ENCODE measurements at regions of chr17 and their contacts with region 1.

Region 1: DNA sequence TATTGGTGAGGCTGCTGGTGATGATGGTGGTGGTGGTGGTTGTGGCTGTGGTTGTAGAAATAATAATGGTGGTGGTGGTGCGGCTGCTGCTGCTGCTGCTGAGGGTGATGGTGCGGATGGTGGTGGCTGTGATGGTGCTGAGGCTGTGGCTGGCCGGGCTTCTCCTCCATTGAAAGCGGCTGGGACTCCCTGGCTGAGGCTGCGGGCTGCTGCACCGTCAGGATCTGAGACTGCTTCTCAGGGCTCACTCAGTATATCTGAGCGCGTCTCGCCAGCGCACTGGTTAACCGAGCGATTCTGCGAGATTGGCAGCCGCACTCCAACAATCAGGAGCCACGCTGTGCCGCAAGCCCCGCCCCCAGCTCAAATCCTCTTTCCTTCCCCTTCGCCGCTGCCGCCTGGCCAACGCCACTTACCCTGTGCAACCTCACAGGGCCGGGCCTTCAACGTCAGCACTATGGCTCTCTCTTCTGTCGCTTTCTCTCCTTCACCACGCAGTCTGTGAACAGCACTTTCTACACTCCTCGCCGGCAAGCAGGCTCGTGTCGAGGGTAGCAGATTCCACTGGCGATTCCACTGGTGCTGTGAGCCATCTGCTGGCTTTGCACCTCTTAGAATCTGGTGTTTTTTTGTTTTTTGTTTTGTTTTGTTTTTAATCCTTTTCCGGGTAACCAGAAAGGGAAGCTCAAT is at the start of gene NUFIP2:
- DNase-seq: peak; percentile 95
- ATAC-seq: peak; percentile 83
- H3K4me3 Mint-ChIP-seq: peak within 1 kb of the TSS; percentile 100
- H3K27ac Mint-ChIP-seq: peak within 1 kb of the TSS; percentile 100
- H3K4me1 Mint-ChIP-seq: peaks cover 45% of the 10 kb centered on the region
- H3K27me3 Mint-ChIP-seq: no peaks in the 10 kb centered on the region
- CTCF ChIP-seq: no peak
- total RNA-seq, gene NUFIP2: 61.0 and 61.8 TPM in 2 replicates

Region 2: DNA sequence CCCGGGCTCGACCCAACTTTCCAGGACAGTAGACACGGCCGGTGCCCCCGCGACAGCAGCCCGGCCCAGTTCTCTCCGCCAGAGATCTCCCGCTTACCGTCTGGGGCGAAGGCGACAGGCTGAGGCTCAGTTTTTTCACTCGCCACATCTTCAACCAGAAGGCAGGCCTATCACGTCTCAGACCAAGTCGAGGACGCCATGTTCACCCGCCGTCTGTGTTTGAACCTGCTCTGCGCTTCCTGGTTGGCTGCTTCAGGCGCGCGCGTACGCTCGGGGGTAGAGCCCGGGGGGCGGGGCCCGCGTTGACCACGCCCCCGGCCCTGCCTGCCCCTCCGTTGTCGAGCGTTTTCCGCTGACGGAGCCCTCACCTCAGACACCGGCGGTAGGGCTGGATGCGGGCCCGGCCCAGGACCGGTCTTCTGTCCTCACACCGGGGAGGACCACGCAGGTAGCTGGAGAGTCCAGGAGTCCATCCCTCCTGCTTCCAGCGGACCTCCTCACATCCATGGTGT is 695.2 kb before region 1 on chr17 and contains the start of gene SPAG5:
- CTCF ChIA-PET with region 1: no interaction called
- POLR2A ChIA-PET with region 1: no interaction called
- intact Hi-C with region 1: loop called (anchors 5 kb)
- DNase-seq: peak; percentile 94
- ATAC-seq: peak; percentile 89
- H3K4me3 Mint-ChIP-seq: peak within 1 kb of the TSS; percentile 87
- H3K27ac Mint-ChIP-seq: peak within 1 kb of the TSS; percentile 96
- H3K4me1 Mint-ChIP-seq: peaks cover 24% of the 10 kb centered on the region
- H3K27me3 Mint-ChIP-seq: no peaks in the 10 kb centered on the region
- CTCF ChIP-seq: no peak
- total RNA-seq, gene SPAG5: 14.6 and 15.8 TPM in 2 replicates

Region 3: DNA sequence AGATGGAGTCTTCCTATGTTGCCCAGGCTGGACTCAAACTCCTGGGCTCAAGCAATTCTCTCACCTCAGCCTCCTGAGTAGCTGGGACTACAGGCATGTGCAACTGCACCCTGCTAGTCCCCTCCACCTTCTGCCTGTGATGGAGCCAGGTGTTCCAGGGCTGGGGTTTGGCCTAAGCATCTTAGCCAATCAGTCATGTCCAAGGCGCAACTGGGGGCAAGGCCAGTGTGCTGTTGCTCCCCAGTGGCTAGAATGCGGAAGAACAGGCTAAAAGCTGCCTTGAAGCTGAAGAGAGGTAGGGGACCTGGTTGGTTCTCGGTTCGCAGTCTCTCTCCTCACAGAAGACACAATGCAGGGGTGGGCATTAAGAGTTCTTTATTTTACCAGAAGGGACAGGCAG is 415.1 kb before region 1 on chr17:
- CTCF ChIA-PET with region 1: no interaction called
- POLR2A ChIA-PET with region 1: no interaction called
- intact Hi-C with region 1: no loop called
- DNase-seq: no peak
- ATAC-seq: peak; percentile 64
- H3K4me3 Mint-ChIP-seq: no peak overlapping the region
- H3K27ac Mint-ChIP-seq: no peak overlapping the region
- H3K4me1 Mint-ChIP-seq: peaks cover 8% of the 10 kb centered on the region
- H3K27me3 Mint-ChIP-seq: no peaks in the 10 kb centered on the region
- CTCF ChIP-seq: no peak

Region 4: DNA sequence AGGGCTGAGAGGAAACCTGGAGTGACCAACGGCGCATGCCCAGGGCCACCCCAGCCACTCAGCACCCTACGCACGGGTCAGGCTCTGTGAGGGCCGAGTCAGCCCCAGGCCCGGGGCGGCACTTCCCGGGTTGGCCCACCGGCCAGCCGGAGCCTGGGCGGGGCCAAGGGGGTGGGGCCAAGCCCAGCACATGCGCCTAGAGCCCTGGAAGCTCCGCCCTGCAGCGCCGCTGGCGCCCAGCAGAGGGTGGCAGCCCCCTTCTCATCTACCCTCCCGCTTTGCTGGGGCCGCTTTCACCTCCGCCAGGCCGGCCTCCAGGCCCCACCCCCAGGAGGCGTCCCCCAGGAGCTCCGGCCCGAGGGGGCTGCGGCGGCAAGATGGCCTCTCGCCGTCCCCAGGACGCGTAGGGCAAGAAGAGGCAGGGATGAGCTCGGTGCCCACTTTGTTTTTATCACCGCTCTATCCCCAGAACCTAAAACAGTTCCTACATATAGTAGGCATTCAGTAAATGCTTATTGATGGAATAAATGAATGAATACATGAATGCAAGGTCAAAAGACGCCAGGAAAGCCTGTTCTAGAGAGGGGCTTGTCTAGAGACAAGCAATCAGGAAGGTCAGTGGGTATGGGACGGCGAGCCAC is 145.1 kb before region 1 on chr17:
- CTCF ChIA-PET with region 1: interaction called, 26 read pairs
- POLR2A ChIA-PET with region 1: interaction called, 25 read pairs
- intact Hi-C with region 1: loop called (anchors 1 kb)
- DNase-seq: peak; percentile 96
- ATAC-seq: peak; percentile 95
- H3K4me3 Mint-ChIP-seq: peak overlapping the region; percentile 83
- H3K27ac Mint-ChIP-seq: peak overlapping the region; percentile 89
- H3K4me1 Mint-ChIP-seq: peaks cover 45% of the 10 kb centered on the region
- H3K27me3 Mint-ChIP-seq: no peaks in the 10 kb centered on the region
- CTCF ChIP-seq: peak; percentile 27

Region 5: DNA sequence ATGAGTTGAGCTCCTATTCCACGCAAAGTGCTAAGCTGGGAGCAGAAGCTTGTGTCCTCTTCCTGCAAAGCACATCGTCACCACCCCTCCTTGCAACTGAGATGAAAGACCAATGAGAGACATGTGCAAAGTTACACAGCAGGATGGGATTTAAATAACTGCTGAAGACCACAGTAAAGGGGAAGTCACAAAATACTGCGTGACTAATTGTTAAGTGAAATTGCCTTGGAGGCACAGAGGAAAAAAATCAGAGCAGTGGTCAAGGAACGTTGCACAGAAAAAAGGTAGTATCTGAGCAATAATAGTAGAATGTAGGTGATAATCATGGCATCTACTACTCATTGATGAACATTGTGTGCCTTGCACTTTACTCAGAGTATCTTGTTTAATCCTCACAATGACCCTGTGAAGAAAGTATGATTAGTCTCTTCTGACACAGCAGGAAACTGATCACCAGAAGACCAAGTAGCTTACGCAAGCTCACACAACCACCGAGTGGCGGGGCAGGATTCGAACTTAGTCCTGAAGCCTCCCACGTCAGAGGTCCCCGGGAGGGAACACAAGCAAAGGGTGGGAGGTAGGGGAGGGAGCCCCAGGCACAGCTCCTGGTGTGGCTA is 98.5 kb before region 1 on chr17:
- CTCF ChIA-PET with region 1: no interaction called
- POLR2A ChIA-PET with region 1: interaction called, 10 read pairs
- intact Hi-C with region 1: no loop called
- DNase-seq: no peak
- ATAC-seq: peak; percentile 89
- H3K4me3 Mint-ChIP-seq: peak overlapping the region; percentile 71
- H3K27ac Mint-ChIP-seq: peak overlapping the region; percentile 67
- H3K4me1 Mint-ChIP-seq: peaks cover 25% of the 10 kb centered on the region
- H3K27me3 Mint-ChIP-seq: no peaks in the 10 kb centered on the region
- CTCF ChIP-seq: no peak

Region 6: GRCh38 chr17:29241015-29241963 is 52.7 kb before region 1 on chr17:
- CTCF ChIA-PET with region 1: no interaction called
- POLR2A ChIA-PET with region 1: no interaction called
- intact Hi-C with region 1: no loop called
- DNase-seq: no peak
- ATAC-seq: no peak
- H3K4me3 Mint-ChIP-seq: no peak overlapping the region
- H3K27ac Mint-ChIP-seq: no peak overlapping the region
- H3K4me1 Mint-ChIP-seq: no peaks in the 10 kb centered on the region
- H3K27me3 Mint-ChIP-seq: no peaks in the 10 kb centered on the region
- CTCF ChIP-seq: no peak

Region 7: DNA sequence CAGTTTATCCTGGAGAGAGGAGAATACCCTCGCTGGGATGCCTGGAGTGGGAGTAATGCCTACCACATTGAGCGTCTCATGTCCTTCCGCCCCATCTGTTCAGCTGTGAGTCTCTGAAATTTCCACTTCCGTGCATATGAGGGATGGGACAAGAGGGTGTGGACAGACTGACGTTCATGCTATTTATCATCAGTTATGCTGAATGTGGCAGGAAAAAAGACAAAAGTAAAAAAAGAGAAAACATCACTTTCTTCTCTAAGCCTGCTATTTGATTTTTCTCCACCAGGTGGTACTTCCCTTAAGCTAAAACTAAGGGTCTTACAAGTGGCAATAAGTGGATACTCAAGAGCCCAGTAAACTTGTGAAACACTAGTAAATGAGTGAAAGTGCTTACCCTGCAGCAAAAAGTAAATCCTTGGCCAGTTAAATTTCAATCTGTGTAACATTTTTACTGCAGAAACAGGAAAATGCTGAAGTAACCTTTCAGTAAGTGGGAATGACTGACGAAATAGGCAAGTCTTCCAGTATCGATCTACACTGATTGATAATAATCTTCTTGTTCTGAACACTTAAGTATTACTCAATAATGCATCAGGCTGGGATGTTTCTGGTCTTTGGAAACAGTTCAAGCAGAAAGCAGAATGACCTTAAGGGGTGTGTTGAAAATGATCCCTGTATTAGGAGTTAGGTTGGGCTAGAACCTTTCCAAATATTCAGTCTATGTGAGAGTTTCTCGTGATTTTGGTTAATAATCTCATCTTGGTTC is 41.8 kb before region 1 on chr17:
- CTCF ChIA-PET with region 1: no interaction called
- POLR2A ChIA-PET with region 1: no interaction called
- intact Hi-C with region 1: loop called (anchors 1 kb)
- DNase-seq: no peak
- ATAC-seq: no peak
- H3K4me3 Mint-ChIP-seq: no peak overlapping the region
- H3K27ac Mint-ChIP-seq: no peak overlapping the region
- H3K4me1 Mint-ChIP-seq: peaks cover 8% of the 10 kb centered on the region
- H3K27me3 Mint-ChIP-seq: no peaks in the 10 kb centered on the region
- CTCF ChIP-seq: no peak

Region 8: DNA sequence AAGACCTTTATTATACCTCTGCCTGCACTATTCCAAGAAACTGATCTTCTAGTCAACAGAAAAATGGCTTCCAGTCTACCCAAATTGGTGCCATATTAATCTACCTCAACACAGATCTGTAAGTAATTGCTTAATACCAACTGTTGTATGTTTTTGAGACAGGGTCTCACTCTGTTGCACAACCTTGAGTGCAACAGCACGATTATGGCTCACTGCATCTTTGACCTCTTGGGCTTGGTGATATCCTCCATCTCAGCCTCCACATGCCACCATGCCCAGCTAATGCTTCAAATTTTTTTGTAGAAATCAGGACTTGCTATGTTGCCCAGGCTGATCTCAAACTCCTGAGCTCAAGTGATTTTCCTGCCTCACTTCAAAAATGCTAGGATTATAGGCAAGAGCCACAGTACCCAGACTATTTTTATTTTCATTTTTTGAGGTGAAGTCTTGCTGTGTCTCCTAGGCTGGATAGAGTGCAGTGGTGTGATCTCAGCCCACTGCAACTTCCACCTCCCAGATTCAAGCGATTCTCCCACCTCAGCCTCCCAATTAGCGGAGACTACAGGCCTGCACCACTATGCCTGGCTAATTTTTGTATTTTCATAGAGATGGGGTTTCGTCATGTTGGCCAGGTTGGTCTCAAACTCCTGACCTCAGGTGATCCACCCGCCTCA is 14.5 kb before region 1 on chr17:
- CTCF ChIA-PET with region 1: interaction called, 4 read pairs
- POLR2A ChIA-PET with region 1: interaction called, 12 read pairs
- intact Hi-C with region 1: loop called (anchors 2 kb)
- DNase-seq: no peak
- ATAC-seq: no peak
- H3K4me3 Mint-ChIP-seq: no peak overlapping the region
- H3K27ac Mint-ChIP-seq: no peak overlapping the region
- H3K4me1 Mint-ChIP-seq: peaks cover 54% of the 10 kb centered on the region
- H3K27me3 Mint-ChIP-seq: no peaks in the 10 kb centered on the region
- CTCF ChIP-seq: no peak

Region 9: DNA sequence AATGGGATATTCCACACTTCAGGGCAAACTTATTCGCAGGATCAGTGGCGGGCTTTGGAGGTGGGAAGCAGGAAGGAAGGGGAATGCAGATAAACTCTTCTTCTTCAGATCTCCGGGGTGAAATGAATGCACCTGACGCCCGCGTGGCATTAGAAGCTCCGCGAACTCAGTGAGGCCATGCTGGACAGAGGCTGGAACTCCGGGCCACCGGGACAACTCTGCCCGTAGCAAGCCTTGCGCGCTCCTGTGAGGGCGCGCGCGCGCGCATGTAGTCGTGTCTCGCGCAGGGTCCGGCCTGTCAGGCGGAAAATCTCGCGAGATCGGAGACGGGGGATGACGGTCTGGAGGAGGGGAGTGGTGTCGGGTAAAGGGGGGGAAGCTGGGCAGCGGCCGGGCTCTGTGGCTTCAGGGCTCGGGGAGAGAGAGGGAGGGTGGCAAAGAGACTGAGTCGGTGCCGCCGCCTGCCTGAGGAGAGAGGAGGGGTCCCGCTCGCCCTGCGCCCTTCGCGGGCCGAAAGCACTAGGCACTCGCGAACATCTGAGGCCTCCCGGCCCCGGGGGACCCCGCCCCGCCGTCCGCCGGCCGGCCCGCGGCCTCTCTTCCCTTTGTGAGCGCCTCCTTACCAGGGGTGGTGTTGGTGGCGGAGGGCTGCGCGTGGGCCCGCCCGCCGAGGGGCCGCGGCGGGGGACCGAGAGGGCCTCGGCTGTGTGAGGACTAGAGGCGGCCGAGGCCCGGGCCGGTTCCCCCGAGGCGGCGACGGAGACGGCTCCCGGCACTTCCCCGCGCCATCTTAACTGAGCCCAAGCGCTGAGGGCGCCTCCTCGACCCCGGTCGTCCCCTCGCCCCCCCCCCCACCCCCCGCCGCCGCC is 96.2 kb after region 1 on chr17 and contains the start of gene TAOK1:
- CTCF ChIA-PET with region 1: interaction called, 3 read pairs
- POLR2A ChIA-PET with region 1: interaction called, 16 read pairs
- intact Hi-C with region 1: loop called (anchors 1 kb)
- DNase-seq: peak; percentile 95
- ATAC-seq: peak; percentile 95
- H3K4me3 Mint-ChIP-seq: peak within 1 kb of the TSS; percentile 91
- H3K27ac Mint-ChIP-seq: peak within 1 kb of the TSS; percentile 93
- H3K4me1 Mint-ChIP-seq: peaks cover 41% of the 10 kb centered on the region
- H3K27me3 Mint-ChIP-seq: no peaks in the 10 kb centered on the region
- CTCF ChIP-seq: no peak
- total RNA-seq, gene TAOK1: 55.1 and 55.5 TPM in 2 replicates

Region 10: GRCh38 chr17:29409963-29410362 is 115.9 kb after region 1 on chr17:
- CTCF ChIA-PET with region 1: no interaction called
- POLR2A ChIA-PET with region 1: no interaction called
- intact Hi-C with region 1: no loop called
- DNase-seq: no peak
- ATAC-seq: no peak
- H3K4me3 Mint-ChIP-seq: no peak overlapping the region
- H3K27ac Mint-ChIP-seq: peak overlapping the region; percentile 10
- H3K4me1 Mint-ChIP-seq: peaks cover 24% of the 10 kb centered on the region
- H3K27me3 Mint-ChIP-seq: no peaks in the 10 kb centered on the region
- CTCF ChIP-seq: no peak

Region 11: DNA sequence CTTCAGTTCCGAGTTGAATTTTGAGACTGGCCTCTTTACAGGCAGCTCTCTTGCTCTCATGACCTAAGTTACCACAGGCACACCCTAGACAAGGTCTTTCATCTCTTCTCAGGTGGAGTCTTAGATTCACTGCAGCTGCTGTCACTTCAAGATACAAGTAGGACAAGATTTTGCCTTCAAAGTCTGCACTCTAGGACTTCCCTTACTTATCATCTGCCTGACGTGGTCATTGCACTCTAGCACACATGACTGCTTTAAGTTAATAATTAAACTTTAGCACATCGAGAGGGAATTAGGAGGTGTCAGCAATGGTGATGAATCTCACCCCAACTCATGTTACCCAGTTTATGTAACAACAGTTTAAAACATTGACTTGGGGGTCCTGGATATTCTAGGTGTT is 1702.4 kb after region 1 on chr17:
- CTCF ChIA-PET with region 1: no interaction called
- POLR2A ChIA-PET with region 1: no interaction called
- intact Hi-C with region 1: no loop called
- DNase-seq: no peak
- ATAC-seq: no peak
- H3K4me3 Mint-ChIP-seq: no peak overlapping the region
- H3K27ac Mint-ChIP-seq: no peak overlapping the region
- H3K4me1 Mint-ChIP-seq: no peaks in the 10 kb centered on the region
- H3K27me3 Mint-ChIP-seq: no peaks in the 10 kb centered on the region
- CTCF ChIP-seq: no peak